CD4-positive, alpha-beta memory T cell (primary cell): ENCODE measurements at regions of chr22 and their contacts with region 1.

Region 1: DNA sequence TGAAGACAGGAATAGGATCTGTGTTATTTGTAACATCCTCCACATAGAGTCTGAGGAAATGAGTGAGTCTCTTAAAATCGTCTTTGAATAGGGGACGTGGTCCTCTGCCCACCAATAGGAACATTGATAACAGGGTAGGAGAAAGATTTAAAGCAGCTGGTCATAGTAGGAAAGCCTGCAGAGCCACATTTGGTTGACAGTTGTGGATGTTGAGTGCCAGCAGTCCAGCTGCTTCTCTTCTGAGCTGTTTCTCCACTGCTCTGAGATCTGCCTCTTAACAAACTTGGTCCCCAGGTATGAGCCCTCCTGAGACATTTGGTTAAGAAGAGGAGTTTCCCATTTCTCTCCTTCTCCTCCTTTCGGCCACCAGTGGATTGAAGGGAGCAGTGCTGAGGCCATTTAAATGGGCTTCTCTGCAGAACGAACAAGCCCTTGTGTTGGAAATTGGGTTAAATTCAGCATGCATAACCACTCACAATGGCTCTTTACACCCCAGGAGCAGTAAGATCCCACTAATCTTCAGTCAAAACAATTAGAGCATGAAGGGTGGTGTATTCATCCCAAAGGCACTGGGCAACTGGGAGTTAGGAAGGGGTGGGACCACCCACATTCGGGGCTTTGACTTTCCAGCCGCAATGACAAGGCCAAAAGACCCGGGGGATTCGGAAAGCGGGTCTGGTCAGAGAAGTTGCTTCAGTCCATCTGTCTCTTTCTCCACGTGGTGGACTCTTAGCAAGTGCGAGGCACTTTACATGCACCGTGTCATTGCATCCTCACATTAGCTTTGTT is 32.3 kb downstream of the MIAT start:
- DNase-seq: no peak
- H3K4me3 ChIP-seq: no peak overlapping the region
- H3K4me3 Mint-ChIP-seq: no peak overlapping the region
- H3K27ac ChIP-seq: no peak overlapping the region
- H3K27ac Mint-ChIP-seq: peak overlapping the region in 5 of 7 donors; percentile 18 to 81 (median 58)
- H3K4me1 ChIP-seq: peaks cover 49% of the 10 kb centered on the region
- H3K4me1 Mint-ChIP-seq: peaks cover 44 to 79% (median 66%) of the 10 kb centered on the region in 4 donors
- H3K27me3 ChIP-seq: no peaks in the 10 kb centered on the region
- H3K27me3 Mint-ChIP-seq: no peaks in the 10 kb centered on the region

Region 2: DNA sequence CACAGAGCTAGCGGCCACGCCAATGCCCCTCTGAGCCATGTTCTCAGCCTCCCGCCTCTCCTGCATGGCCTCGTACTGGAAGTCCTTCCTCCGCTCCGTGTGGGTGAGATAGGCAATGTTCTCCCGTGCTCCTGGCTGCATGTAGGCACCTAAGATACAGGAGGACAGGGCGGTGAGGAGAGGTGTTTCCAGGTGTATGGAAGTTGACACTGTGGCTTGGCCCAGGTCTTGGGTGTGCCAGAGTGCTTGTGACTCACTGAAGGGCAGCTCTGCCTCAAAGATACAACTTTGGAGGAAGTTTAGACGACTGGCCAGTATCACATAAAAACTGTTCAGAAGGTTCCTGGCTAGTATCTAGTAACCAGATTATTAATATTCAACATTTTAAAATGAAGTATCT is 197.5 kb before region 1 on chr22:
- CTCF ChIA-PET with region 1: no interaction called
- POLR2A ChIA-PET with region 1: no interaction called
- intact Hi-C with region 1: no loop called
- DNase-seq: no peak
- H3K4me3 ChIP-seq: no peak overlapping the region
- H3K4me3 Mint-ChIP-seq: peak overlapping the region in 1 of 8 donors; percentile 60
- H3K27ac ChIP-seq: no peak overlapping the region
- H3K27ac Mint-ChIP-seq: no peak overlapping the region
- H3K4me1 ChIP-seq: no peaks in the 10 kb centered on the region
- H3K4me1 Mint-ChIP-seq: peaks cover 0 to 2% (median under 1%) of the 10 kb centered on the region in 4 donors
- H3K27me3 ChIP-seq: no peaks in the 10 kb centered on the region
- H3K27me3 Mint-ChIP-seq: no peaks in the 10 kb centered on the region

Region 3: GRCh38 chr22:26679003-26679629 is 10.6 kb before region 1 on chr22:
- CTCF ChIA-PET with region 1: interaction called, 24 read pairs
- POLR2A ChIA-PET with region 1: interaction called, 27 read pairs
- intact Hi-C with region 1: no loop called
- DNase-seq: peak; percentile 53 to 67 (median 61)
- H3K4me3 ChIP-seq: no peak overlapping the region
- H3K4me3 Mint-ChIP-seq: peak overlapping the region in 7 of 8 donors; percentile 25 to 80 (median 42)
- H3K27ac ChIP-seq: no peak overlapping the region
- H3K27ac Mint-ChIP-seq: peak overlapping the region; percentile 24 to 86 (median 79)
- H3K4me1 ChIP-seq: peaks cover 54% of the 10 kb centered on the region
- H3K4me1 Mint-ChIP-seq: peaks cover 56 to 73% (median 64%) of the 10 kb centered on the region in 4 donors
- H3K27me3 ChIP-seq: no peaks in the 10 kb centered on the region
- H3K27me3 Mint-ChIP-seq: no peaks in the 10 kb centered on the region